Psoas muscle (tissue), 8 donors: ENCODE measurements at regions of chr7 and their contacts with region 1.

Region 1: GRCh38 chr7:98434095-98434494 is 33.2 kb upstream of the BAIAP2L1 start:
- DNase-seq: no peak
- ATAC-seq: no peak
- H3K4me3 ChIP-seq: no peak overlapping the region
- H3K27ac ChIP-seq: no peak overlapping the region
- H3K4me1 ChIP-seq: no peaks in the 10 kb centered on the region
- H3K27me3 ChIP-seq: no peaks in the 10 kb centered on the region
- CTCF ChIP-seq: no peak

Region 2: GRCh38 chr7:98617051-98617959 is 183.2 kb after region 1 on chr7 and contains the start of gene NPTX2:
- intact Hi-C with region 1: no loop called
- DNase-seq: peak; percentile 57 to 75
- ATAC-seq: peak; percentile 50 to 78 (median 67)
- H3K4me3 ChIP-seq: peak within 1 kb of the TSS; percentile 49
- H3K27ac ChIP-seq: no peak within 1 kb of the TSS
- H3K4me1 ChIP-seq: no peaks in the 10 kb centered on the region
- H3K27me3 ChIP-seq: peaks cover 3 to 59% (median 24%) of the 10 kb centered on the region in 3 donors
- CTCF ChIP-seq: no peak
- total RNA-seq, gene NPTX2: 1.3 to 8.7 (median 3.7) TPM

Region 3: DNA sequence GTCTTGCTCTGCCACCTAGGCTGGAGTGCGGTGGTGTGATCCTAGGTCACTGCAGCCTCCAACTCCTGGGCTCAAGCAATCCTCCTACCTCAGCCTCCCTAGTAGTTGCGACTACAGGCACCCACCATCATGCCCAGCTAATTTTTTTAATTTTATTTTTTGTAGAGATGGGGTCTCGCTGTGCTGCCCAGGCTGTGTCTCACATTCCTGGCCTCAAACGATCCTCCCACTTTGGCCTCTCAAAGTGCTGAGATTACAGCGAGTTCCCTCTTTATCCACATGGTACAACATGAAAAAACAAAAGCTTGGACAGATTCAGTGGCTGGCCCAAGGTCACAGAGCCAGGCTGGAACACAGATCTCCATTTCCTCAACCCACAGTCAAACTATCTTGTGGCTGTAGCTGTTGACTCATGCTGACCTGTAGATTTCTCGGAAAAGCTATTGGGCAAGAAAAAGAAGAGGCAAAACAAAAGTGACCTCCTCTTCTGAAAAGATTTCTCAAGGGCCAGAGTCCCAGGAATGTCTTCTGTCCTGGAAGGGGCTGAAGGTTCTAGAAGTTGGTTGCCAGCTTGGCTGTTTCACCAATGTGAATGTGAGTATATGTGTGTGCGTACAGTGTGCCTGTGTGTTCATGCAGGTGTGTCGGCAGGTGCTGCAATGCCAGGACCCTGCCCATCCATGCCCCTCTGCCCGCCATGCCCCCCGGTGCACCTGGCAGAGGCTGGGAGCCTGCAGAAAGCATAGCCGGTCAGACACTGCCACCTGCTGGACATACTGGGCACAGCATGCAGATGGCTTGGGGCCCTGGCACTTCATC is 407.3 kb after region 1 on chr7:
- intact Hi-C with region 1: loop called (anchors 1 to 2 kb)
- DNase-seq: peak; percentile 66 to 74
- ATAC-seq: peak; percentile 73 to 80 (median 76)
- H3K4me3 ChIP-seq: no peak overlapping the region
- H3K27ac ChIP-seq: no peak overlapping the region
- H3K4me1 ChIP-seq: no peaks in the 10 kb centered on the region
- H3K27me3 ChIP-seq: peaks cover 0 to 4% (median 3%) of the 10 kb centered on the region in 3 donors
- CTCF ChIP-seq: peak; percentile 96